Natural killer cell (primary cell): ENCODE measurements at regions of chr22 and their contacts with region 1.

Region 1: DNA sequence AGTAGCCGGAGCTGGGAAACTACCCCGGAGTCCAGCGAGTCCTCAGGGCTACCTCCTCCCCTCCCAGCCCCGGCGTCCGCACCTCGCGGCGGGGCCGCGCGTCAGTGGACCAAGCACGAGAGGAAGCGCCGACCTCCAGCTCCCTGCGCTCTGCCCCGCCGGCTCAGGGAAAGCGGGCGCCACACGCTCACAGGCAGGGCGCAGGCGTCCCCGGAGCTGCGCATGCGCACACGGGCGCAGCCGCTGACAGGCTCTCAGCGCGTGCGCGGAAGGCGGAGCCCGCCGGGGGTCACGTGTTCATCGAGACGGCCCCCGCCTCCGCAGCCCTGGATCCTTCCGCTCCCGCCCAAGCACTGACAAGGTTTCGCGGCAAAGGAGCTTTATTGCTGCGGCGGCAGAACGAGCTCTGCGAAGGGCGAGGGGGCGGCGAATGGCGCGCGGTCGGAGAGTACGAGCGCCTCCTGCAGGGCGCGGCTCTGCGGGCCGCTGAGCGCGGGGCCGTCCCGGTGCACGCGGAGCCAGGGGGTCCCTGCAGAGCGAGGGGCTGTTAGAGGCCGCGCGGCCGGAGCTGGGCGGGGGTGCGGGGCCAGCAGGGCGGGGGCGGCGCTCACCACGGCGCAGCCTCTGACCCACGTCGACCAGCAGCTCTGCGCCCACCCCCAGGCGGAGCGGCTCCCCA is at the start of gene SCO2:
- DNase-seq: peak; percentile 95 to 100
- ATAC-seq: peak; percentile 60 to 78 (median 69)
- H3K4me3 ChIP-seq: peak within 1 kb of the TSS; percentile 76
- H3K4me3 Mint-ChIP-seq: peak within 1 kb of the TSS; percentile 90
- H3K27ac ChIP-seq: peak within 1 kb of the TSS; percentile 93
- H3K27ac Mint-ChIP-seq: peak within 1 kb of the TSS; percentile 84 to 91
- H3K4me1 ChIP-seq: peaks cover 50% of the 10 kb centered on the region
- H3K4me1 Mint-ChIP-seq: peaks cover 26 to 31% of the 10 kb centered on the region in 2 donors
- H3K27me3 ChIP-seq: no peaks in the 10 kb centered on the region
- H3K27me3 Mint-ChIP-seq: no peaks in the 10 kb centered on the region
- CTCF ChIP-seq: no peak
- total RNA-seq, gene SCO2: 2.8 to 13.5 (median 8.4) TPM

Region 2: DNA sequence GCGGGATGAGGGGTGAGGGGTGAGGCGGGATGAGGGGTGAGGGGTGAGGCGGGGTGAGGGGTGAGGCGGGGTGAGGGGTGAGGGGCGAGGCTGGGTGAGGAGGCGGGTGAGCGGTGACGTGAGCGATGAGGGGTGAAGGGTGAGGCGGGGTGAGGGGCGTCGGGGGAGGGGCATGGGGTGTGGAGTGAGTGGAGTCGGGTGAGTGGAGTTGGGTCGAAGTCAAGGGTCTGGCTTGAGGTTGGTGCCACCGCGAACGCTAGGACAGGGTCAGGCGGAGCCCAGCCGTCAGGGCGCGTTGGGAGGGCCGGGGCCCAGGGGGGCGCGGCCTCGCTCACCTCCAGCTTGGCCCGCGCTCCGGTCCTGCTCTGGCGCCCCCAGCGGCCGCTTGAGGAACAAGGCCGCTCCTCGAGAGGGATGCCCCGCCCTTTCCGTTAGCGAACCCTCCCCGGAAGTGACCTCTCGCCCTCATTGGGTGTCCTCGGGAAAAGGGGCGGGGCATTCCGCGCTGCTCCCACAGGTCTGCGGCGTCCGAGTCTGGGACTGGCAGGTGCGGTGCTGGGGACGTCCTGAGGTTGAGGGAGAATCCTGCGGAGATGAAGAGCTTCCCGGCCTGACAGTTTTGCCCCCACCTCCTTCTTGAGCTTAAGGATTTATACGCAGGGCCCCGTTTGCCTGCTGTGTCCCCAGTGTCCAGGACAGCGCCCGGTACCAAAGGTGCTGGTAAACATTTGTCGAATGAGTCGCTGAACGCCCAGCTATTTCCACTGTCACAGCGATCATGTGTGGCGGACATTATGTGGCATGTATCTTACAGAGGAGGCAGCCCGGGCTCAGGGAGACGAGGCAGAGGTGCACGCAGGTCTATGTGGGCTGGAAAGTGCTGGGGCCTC is 37.2 kb after region 1 on chr22 and contains the start of gene SYCE3:
- intact Hi-C with region 1: loop called (anchors 5 kb)
- DNase-seq: peak; percentile 98
- ATAC-seq: peak; percentile 93 to 98 (median 93)
- H3K4me3 ChIP-seq: peak within 1 kb of the TSS; percentile 49
- H3K4me3 Mint-ChIP-seq: peak within 1 kb of the TSS; percentile 97
- H3K27ac ChIP-seq: peak within 1 kb of the TSS; percentile 74
- H3K27ac Mint-ChIP-seq: peak within 1 kb of the TSS; percentile 87 to 95
- H3K4me1 ChIP-seq: peaks cover 15% of the 10 kb centered on the region
- H3K4me1 Mint-ChIP-seq: peaks cover 23 to 28% of the 10 kb centered on the region in 2 donors
- H3K27me3 ChIP-seq: no peaks in the 10 kb centered on the region
- H3K27me3 Mint-ChIP-seq: peaks cover 0 to 6% of the 10 kb centered on the region in 2 donors
- CTCF ChIP-seq: peak; percentile 82
- total RNA-seq, gene SYCE3: not detected